Heart right ventricle (tissue), 16 donors: ENCODE measurements at regions of chr2 and their contacts with region 1.

Region 1: DNA sequence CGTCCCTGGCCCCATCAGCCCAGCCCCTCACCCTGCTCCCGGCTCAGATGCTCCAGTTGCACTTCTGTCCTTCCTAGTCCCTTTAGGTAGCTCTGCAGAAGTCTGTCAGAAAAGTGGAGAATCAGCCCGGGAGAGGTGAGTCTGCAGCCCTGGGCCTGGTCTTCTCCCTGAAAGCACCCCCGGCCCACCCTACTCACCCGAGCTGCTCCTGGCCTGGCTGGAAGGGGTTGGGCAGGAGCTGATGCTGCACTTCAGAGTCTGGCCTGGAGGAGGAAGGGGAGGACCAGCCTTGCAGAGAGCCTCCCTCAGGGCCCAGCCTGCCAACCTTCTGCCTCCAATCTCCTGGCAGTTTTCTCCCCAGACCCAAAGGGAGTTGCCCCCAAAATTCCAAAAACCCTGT is 15.8 kb downstream of the KHK start:
- DNase-seq: no peak
- ATAC-seq: no peak
- H3K4me3 ChIP-seq: no peak overlapping the region
- H3K27ac ChIP-seq: no peak overlapping the region
- H3K4me1 ChIP-seq: no peaks in the 10 kb centered on the region
- H3K27me3 ChIP-seq: peaks cover 0 to 20% (median 2%) of the 10 kb centered on the region in 7 donors
- CTCF ChIP-seq: no peak

Region 2: GRCh38 chr2:27152786-27153510 is 50.6 kb after region 1 on chr2:
- intact Hi-C with region 1: loop called in 1 of 10 experiments (anchors 5 kb)
- DNase-seq: no peak
- ATAC-seq: no peak
- H3K4me3 ChIP-seq: no peak overlapping the region
- H3K27ac ChIP-seq: no peak overlapping the region
- H3K4me1 ChIP-seq: no peaks in the 10 kb centered on the region
- H3K27me3 ChIP-seq: peaks cover 0 to 12% (median 0%) of the 10 kb centered on the region in 7 donors
- CTCF ChIP-seq: no peak

Region 3: GRCh38 chr2:27191053-27191829 is 88.9 kb after region 1 on chr2:
- intact Hi-C with region 1: loop called (anchors 2 to 5 kb)
- DNase-seq: peak in 1 of 2 donors; percentile 44
- ATAC-seq: peak; percentile 46 to 82 (median 70)
- H3K4me3 ChIP-seq: no peak overlapping the region
- H3K27ac ChIP-seq: no peak overlapping the region
- H3K4me1 ChIP-seq: peaks cover 0 to 2% (median 0%) of the 10 kb centered on the region in 9 donors
- H3K27me3 ChIP-seq: peaks cover 0 to 4% (median 0%) of the 10 kb centered on the region in 7 donors
- CTCF ChIP-seq: peak; percentile 30 to 71 (median 60)

Region 4: DNA sequence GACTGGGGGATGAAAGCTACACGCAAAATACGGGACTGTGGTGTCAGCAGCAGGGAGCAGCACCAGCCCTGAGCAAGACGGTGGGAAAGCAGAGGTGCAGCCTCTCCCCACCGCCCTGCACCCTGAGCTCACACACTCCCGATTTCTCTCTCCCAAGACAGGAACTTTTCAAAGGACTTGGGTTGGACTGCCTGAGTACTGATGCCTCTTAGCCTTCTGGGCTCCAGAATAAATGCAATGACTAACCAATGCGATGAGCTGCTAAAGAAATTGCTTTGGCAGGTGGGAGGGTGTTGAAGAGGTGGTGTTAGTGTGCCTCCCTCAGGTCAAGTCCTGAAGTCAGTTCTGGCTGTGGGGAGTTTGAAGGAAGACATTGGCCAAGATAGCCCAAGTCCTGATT is 189.5 kb after region 1 on chr2:
- intact Hi-C with region 1: loop called in 1 of 10 experiments (anchors 10 kb)
- DNase-seq: no peak
- ATAC-seq: peak in 7 of 8 donors; percentile 26 to 67 (median 46)
- H3K4me3 ChIP-seq: no peak overlapping the region
- H3K27ac ChIP-seq: peak overlapping the region in 1 of 10 donors; percentile 25
- H3K4me1 ChIP-seq: peaks cover 3 to 97% (median 34%) of the 10 kb centered on the region in 9 donors
- H3K27me3 ChIP-seq: peaks cover 0 to 18% (median 0%) of the 10 kb centered on the region in 7 donors
- CTCF ChIP-seq: peak in 2 of 9 donors; percentile 20 to 28